Activated CD4-positive, alpha-beta T cell treated with anti-CD3 and anti-CD28 coated beads, Interleukin-2, amount 10 ng/mL, durations not matched to agents 24 days and 14 days (primary cell): ENCODE measurements at regions of chr2 and their contacts with region 1.

Region 1: GRCh38 chr2:160324161-160324800 is 124.2 kb upstream of the ITGB6 start:
- DNase-seq: peak; percentile 79
- H3K4me3 Mint-ChIP-seq: no peak overlapping the region
- H3K27ac Mint-ChIP-seq: no peak overlapping the region
- H3K4me1 Mint-ChIP-seq: peaks cover 60% of the 10 kb centered on the region
- H3K27me3 Mint-ChIP-seq: no peaks in the 10 kb centered on the region

Region 2: DNA sequence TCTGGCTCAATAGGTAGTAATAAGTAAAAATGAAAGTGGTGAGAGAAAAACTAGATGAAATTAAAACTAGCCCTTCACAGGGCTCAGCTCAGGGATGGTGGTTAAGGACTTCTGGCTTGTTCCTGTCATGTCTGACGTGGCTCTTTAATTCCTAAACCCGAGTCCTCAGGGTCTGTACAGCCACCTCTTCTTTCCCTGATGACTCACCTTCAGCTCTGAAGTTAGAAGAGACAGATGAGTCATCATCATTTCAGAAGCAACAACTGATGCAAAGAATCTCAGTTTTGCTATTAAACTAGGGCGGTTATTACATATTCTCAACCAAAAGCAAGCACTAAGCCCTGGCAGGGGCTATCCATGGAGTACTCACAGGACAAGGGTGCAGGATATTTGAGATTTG is 100.2 kb before region 1 on chr2:
- intact Hi-C with region 1: loop called (anchors 1 kb)
- DNase-seq: peak; percentile 73
- H3K4me3 Mint-ChIP-seq: peak overlapping the region; percentile 31
- H3K27ac Mint-ChIP-seq: peak overlapping the region; percentile 67
- H3K4me1 Mint-ChIP-seq: peaks cover 44% of the 10 kb centered on the region
- H3K27me3 Mint-ChIP-seq: peaks cover 4% of the 10 kb centered on the region

Region 3: DNA sequence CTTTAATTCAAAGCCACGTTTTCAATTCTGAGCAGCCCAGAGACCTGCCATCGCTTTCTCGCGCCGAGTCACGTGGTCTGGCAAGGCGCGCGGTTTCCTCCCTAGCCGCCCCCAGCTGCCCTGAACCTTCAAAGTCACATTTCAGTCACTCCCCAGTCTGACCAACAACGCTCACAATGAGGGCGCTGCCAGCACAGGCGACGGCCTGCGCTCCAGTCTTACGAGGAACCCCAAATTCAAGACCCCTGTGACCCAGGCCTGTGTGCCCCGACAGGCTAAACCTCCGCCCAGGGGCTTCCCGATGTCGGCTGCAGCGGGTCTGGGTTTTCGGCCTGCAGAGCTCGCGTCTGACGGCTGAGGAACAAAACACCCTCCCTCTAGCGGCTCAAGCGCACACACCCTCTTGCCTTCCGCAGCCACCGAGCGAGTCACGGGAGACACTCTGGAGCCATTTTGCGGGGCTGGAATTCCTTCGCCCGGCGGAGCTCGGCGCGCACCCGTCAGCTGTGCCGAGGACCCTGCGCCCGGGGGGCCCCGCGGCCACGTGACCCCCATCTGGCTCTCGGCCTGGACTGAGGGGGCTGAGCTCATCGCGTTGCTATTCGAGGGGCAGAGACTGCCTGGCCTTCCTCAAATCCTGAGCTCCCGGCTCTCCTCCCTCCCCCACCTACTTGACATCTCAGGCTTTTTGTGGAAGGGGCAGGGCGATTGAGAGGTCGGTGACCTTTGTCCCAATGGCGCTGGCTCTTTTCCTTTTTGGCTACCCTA is 54.3 kb before region 1 on chr2:
- intact Hi-C with region 1: no loop called
- DNase-seq: peak; percentile 79
- H3K4me3 Mint-ChIP-seq: peak overlapping the region; percentile 74
- H3K27ac Mint-ChIP-seq: peak overlapping the region; percentile 73
- H3K4me1 Mint-ChIP-seq: peaks cover 42% of the 10 kb centered on the region
- H3K27me3 Mint-ChIP-seq: peaks cover 10% of the 10 kb centered on the region

Region 4: DNA sequence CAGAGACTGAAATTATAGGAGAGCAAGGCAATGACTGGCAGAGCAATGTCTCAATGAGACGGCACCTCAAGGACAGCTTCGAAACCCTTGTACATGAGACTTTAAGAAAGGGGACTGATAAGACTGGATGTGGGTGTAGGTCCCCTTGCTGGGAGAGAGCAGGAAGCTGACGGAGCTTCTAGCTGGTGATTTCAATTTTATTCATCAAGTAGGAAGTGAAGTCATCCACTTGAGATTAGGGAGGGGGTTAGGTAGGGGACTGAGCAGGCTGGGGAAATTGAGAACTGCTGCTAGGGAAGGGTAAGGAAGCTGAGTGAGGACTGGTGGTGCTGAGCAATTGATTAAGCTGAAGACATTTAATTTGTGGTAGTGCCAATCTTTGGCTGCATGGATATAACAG is 24.7 kb before region 1 on chr2:
- intact Hi-C with region 1: loop called (anchors 2 kb)
- DNase-seq: no peak
- H3K4me3 Mint-ChIP-seq: no peak overlapping the region
- H3K27ac Mint-ChIP-seq: peak overlapping the region; percentile 45
- H3K4me1 Mint-ChIP-seq: peaks cover 58% of the 10 kb centered on the region
- H3K27me3 Mint-ChIP-seq: no peaks in the 10 kb centered on the region

Region 5: DNA sequence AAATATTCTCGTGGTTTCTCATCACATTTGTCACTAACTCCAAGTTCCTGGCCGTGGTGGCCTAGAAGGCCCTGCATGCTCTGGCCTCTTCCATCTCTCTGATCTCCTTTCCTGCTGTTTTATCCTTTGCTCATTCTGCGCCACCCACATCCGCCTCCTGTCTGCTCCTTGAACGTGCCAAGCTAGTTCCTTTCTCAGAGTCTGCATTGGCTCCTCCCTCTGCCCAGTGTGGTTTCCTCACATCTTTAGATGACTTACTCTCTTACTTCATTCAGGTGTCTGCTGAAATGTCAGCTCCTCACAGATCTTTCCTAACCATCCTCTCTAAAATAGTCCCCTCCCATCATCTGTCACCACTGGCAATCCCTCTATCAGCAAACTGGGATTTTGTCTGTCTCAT is 328.0 kb after region 1 on chr2:
- intact Hi-C with region 1: loop called (anchors 5 kb)
- DNase-seq: peak; percentile 89
- H3K4me3 Mint-ChIP-seq: peak overlapping the region; percentile 17
- H3K27ac Mint-ChIP-seq: peak overlapping the region; percentile 38
- H3K4me1 Mint-ChIP-seq: peaks cover 22% of the 10 kb centered on the region
- H3K27me3 Mint-ChIP-seq: peaks cover 16% of the 10 kb centered on the region

Region 6: DNA sequence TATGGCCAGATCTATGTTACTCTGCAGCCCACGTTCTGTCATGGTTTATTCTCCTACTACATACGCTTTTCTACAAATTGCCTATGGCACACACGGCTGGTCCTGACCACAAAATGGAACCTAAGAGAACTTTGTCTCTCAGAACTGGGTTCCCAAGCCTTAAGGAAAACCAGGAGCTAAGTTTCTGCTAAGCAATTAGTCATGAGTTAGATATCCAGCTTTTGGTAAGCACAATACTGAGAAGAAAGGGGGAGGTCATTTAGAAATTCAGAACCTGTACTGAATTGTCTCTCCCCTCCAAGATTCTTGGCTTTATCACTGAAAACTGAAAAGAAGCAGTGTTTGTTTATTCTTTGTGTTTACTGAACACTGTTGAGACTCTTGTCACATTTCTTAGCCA is 552.5 kb after region 1 on chr2:
- intact Hi-C with region 1: no loop called
- DNase-seq: no peak
- H3K4me3 Mint-ChIP-seq: no peak overlapping the region
- H3K27ac Mint-ChIP-seq: no peak overlapping the region
- H3K4me1 Mint-ChIP-seq: no peaks in the 10 kb centered on the region
- H3K27me3 Mint-ChIP-seq: no peaks in the 10 kb centered on the region

Region 7: DNA sequence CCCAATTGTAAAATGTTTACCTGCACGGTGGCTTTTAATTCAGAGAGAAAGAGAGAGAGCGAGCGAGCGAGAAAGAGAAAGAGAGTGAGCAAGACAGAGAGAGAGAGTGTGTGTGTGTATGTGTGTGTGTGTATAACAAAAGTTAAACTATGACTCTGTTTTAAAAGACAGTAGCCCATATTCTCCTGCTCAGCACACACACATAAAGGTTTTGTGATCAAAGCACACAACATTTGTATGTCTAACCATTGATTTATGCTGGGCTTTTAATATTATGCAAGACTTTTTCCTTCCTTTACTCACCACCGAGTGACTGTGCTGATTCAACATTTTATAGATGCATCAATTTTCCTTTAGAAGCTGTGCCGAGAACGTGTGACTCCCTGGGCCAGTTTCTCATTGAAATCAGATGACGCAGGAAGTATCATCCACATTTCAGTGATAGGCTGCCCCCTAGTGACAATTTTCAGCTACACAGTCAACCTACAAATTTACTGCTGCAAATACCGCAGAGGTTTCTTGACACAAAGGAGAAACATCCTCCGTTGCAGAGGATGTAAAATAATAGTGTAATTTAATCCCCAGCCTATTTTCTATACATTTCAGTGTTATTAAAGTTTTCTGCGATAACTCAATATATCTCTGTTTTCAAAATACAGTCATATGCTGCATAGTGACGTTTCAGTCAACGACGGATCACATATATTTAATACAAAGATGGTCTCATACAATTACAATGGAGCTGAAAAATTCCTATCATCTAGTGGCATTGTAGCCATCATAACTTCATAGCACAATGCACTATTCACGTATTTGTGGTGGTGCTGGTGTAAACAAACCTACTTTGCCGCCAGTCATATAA is 670.1 kb after region 1 on chr2:
- intact Hi-C with region 1: loop called (anchors 1 kb)
- DNase-seq: peak; percentile 93
- H3K4me3 Mint-ChIP-seq: no peak overlapping the region
- H3K27ac Mint-ChIP-seq: no peak overlapping the region
- H3K4me1 Mint-ChIP-seq: peaks cover 9% of the 10 kb centered on the region
- H3K27me3 Mint-ChIP-seq: peaks cover 4% of the 10 kb centered on the region